IMR-90 (cell line): ENCODE measurements at regions of chr10 and their contacts with region 1.

Region 1: DNA sequence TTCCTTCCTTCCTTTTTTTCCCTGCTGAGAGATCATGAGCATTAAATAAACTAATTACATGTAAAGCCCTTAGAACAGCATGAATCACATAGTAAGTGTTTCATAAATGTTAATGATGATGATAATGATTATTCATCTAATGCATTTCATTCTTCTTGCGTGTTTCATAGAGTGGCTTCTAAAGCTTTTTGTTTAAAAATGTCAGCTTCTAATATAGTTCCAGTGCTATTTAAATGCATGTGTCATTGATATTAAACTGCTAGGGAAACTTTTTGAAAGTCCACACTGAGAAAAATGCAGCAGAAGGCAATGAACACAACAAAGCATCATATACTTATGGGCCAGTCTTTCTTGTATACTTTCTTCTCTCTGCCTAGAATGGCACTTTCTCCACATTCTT is 894.8 kb downstream of the REEP3 start:
- DNase-seq: no peak
- ATAC-seq: peak; percentile 51
- H3K4me3 ChIP-seq: no peak overlapping the region
- H3K27ac ChIP-seq: no peak overlapping the region
- H3K4me1 ChIP-seq: no peaks in the 10 kb centered on the region
- H3K27me3 ChIP-seq: no peaks in the 10 kb centered on the region
- CTCF ChIP-seq: no peak
- POLR2A ChIP-seq: no peak
- RAD21 ChIP-seq: no peak

Region 2: GRCh38 chr10:64426745-64427144 is 10.7 kb after region 1 on chr10:
- CTCF ChIA-PET with region 1: no interaction called
- POLR2A ChIA-PET with region 1: no interaction called
- dilution Hi-C with region 1: no loop called
- in situ Hi-C with region 1: no loop called
- intact Hi-C with region 1: loop called (anchors 1 kb)
- DNase-seq: no peak
- ATAC-seq: no peak
- H3K4me3 ChIP-seq: no peak overlapping the region
- H3K27ac ChIP-seq: no peak overlapping the region
- H3K4me1 ChIP-seq: no peaks in the 10 kb centered on the region
- H3K27me3 ChIP-seq: no peaks in the 10 kb centered on the region
- CTCF ChIP-seq: no peak
- POLR2A ChIP-seq: no peak
- RAD21 ChIP-seq: no peak